ENCODE measurements at regions of chr9 and their contacts with region 1.

Region 1: GRCh38 chr9:131598121-131598520 is 52.8 kb downstream of the PRRT1B start:
- DNase-seq: peak; percentile 94
- H3K4me3 ChIP-seq: peak overlapping the region in 1 of 3 experiments; percentile 48
- H3K4me3 Mint-ChIP-seq: peak overlapping the region; percentile 51 to 55
- H3K27ac ChIP-seq: peak overlapping the region; percentile 78 to 93
- H3K27ac Mint-ChIP-seq: peak overlapping the region; percentile 89 to 97 (median 94)
- H3K4me1 ChIP-seq: peaks cover 56 to 74% of the 10 kb centered on the region in 2 donors
- H3K4me1 Mint-ChIP-seq: peaks cover 63% of the 10 kb centered on the region
- H3K27me3 ChIP-seq: no peaks in the 10 kb centered on the region
- H3K27me3 Mint-ChIP-seq: peaks cover 0 to 2% (median 1%) of the 10 kb centered on the region in 3 donors
- CTCF ChIP-seq: no peak

Region 2: DNA sequence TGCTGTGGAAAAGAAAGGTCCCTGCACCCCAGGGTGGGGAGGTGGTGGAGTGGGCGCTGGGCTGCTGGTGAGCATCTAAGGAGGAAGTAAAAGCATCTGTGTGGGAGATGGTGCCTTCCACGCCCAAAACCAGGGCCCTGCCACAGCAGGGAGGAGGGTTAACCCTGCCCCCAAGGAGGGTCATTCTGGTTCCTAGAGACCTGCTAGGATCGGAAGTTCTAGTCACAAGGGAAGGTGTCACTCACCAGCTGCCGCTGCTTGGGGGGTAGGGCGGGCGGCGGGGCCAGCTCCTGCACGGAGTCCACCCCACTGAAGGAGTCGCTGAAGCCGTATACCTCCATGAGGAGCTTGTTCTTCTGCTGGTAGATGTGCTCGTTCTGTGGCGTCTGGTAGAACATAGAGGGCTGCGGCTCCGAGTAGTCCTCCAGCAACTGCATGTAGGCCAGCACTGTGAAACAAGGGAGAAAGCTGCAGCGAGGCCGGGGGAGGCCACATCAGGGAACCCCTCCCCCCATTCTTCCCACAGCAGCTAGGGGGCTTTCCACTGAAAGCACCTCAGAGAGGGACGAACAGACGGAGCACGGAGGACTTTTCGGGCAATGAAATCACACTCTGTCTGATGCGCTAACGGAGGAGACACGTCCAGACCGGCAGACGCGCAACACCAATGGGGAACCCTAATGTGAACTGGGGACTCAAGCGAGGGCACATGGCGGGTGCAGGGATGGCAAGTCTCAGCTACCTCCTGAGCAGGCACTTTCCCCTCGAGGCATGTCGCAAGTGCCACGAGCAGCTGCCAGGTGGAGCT is 23.6 kb after region 1 on chr9:
- intact Hi-C with region 1: loop called in 1 of 2 experiments (anchors 2 kb)
- DNase-seq: peak; percentile 62 to 79 (median 74)
- H3K4me3 ChIP-seq: peak overlapping the region in 1 of 3 experiments; percentile 12
- H3K4me3 Mint-ChIP-seq: no peak overlapping the region
- H3K27ac ChIP-seq: peak overlapping the region; percentile 75 to 100
- H3K27ac Mint-ChIP-seq: peak overlapping the region; percentile 88 to 98 (median 93)
- H3K4me1 ChIP-seq: peaks cover 48 to 53% of the 10 kb centered on the region in 2 donors
- H3K4me1 Mint-ChIP-seq: peaks cover 61% of the 10 kb centered on the region
- H3K27me3 ChIP-seq: no peaks in the 10 kb centered on the region
- H3K27me3 Mint-ChIP-seq: peaks cover 0 to 3% (median 0%) of the 10 kb centered on the region in 3 donors
- CTCF ChIP-seq: no peak

Region 3: GRCh38 chr9:131645078-131645776 is 47.1 kb after region 1 on chr9:
- intact Hi-C with region 1: loop called in 1 of 2 experiments (anchors 5 kb)
- DNase-seq: peak; percentile 61 to 68 (median 67)
- H3K4me3 ChIP-seq: no peak overlapping the region
- H3K4me3 Mint-ChIP-seq: no peak overlapping the region
- H3K27ac ChIP-seq: peak overlapping the region; percentile 24 to 67
- H3K27ac Mint-ChIP-seq: peak overlapping the region; percentile 18 to 89 (median 65)
- H3K4me1 ChIP-seq: peaks cover 26 to 30% of the 10 kb centered on the region in 2 donors
- H3K4me1 Mint-ChIP-seq: peaks cover 35% of the 10 kb centered on the region
- H3K27me3 ChIP-seq: no peaks in the 10 kb centered on the region
- H3K27me3 Mint-ChIP-seq: peaks cover 0 to 2% (median 0%) of the 10 kb centered on the region in 3 donors
- CTCF ChIP-seq: no peak

Measured in CD14-positive monocyte (primary cell).